Activated T-helper 1 cell treated with anti-CD3 and anti-CD28 coated beads, Interleukin-12 subunit alpha, Interleukin-12 subunit beta, Interleukin-2, Interleukin-4 antibody, amounts not matched to agents 30 ng/mL and 10 ng/mL and 1 ng/mL, durations not matched to agents 14 hours and 24 hours and 36 hours (primary cell): ENCODE measurements at regions of chr12 and their contacts with region 1.

Region 1: DNA sequence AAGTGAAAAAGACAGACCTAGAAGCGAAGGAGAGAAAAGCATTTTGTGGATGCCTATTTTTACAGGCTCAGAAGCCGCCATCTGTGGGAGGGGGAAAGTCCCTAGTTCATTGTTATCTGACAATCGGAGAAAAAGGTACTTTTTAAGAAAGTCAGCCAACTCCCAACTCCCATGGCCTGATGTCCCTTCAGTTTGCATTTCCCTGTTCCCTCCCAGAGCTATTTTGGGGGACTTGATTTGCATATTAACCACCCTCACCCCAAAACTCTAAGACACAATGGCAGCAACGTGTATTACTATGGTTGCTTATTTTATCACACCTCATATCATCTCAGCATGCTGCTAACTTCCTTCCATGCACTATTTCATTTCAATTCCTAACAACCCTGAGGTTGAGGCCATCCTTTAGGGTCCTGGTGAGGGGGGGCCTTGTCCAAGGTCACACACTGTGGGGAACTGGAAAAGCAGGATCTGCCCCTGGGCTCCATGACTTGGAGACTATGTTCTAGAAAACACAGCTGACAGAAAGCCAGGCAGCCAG is 18.7 kb downstream of the HVCN1 start:
- DNase-seq: peak; percentile 37
- H3K4me3 Mint-ChIP-seq: peak overlapping the region; percentile 52
- H3K27ac Mint-ChIP-seq: peak overlapping the region; percentile 80
- H3K4me1 Mint-ChIP-seq: peaks cover 46% of the 10 kb centered on the region
- H3K27me3 Mint-ChIP-seq: peaks cover 2% of the 10 kb centered on the region

Region 2: DNA sequence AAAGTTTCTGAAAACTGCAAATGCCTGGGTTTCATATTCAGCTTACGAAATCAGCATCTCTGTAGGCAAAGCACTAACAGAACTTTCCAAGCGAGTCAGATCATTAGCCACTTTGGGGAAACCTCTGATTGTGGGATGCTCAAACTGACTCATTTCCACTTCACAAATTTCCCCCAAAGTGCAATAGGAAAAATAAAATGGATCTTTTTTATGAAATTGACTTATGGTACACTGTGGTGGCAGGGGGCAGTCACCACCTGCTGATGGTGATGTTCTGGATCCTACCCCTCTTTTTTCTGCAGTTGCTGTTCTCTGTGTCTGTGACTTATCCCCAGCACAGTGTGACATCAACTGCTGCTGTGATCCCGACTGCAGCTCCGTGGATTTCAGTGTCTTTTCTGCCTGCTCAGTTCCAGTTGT is 50.7 kb before region 1 on chr12:
- intact Hi-C with region 1: loop called (anchors 1 kb)
- DNase-seq: no peak
- H3K4me3 Mint-ChIP-seq: peak overlapping the region; percentile 37
- H3K27ac Mint-ChIP-seq: peak overlapping the region; percentile 77
- H3K4me1 Mint-ChIP-seq: peaks cover 10% of the 10 kb centered on the region
- H3K27me3 Mint-ChIP-seq: peaks cover 4% of the 10 kb centered on the region